CD4-positive, alpha-beta T cell (primary cell): ENCODE measurements at regions of chr6 and their contacts with region 1.

Region 1: DNA sequence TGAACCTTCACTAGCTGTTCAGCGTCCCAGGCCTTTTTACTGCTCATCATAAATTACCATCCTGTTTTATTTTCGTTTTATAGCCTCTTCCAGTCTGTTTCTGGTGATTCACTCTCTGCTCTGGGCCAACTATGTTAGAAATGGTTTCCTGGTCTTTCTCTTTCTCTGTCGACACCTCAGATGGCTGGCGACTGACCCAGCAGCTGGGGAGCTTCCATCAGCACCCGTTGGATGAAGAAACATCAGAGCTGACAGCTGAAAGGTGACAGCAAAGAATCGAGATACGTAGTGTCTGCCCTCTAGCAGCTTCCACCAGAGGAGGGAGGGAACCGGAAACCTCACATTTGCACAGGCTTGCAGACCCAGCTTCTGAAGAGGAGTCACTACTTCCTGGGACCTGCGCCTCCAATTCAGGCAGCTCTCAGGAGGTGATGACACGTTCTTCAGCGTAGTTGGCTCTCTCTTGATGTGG is 82.9 kb upstream of the MLN start:
- DNase-seq: peak in 6 of 14 experiments; percentile 16 to 66 (median 48)
- ATAC-seq: peak; percentile 71
- H3K4me3 ChIP-seq: no peak overlapping the region
- H3K4me3 Mint-ChIP-seq: no peak overlapping the region
- H3K27ac ChIP-seq: no peak overlapping the region
- H3K27ac Mint-ChIP-seq: peak overlapping the region; percentile 34
- H3K4me1 ChIP-seq: peaks cover 18% of the 10 kb centered on the region
- H3K4me1 Mint-ChIP-seq: peaks cover 12% of the 10 kb centered on the region
- H3K27me3 ChIP-seq: no peaks in the 10 kb centered on the region
- H3K27me3 Mint-ChIP-seq: no peaks in the 10 kb centered on the region
- CTCF ChIP-seq: no peak

Region 2: DNA sequence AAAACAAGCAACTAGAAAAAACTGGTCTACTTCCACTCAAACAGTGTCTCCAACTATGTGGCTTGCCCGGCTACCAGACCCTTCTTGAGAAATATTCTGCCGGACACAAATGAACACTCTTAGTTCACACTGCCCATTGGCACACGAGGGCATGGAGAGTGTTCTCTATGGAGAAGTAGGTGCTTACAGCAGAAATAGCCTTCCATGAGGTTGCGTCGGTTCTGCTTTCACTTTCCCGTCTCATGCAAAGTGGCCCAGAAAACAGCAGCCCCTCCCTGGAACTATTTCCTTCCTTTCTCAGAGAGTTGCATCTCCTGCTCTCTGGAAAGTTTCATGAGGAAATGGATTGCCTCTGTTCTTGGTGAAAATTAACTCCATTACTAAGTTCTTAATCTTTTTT is 867.8 kb before region 1 on chr6:
- CTCF ChIA-PET with region 1: no interaction called
- POLR2A ChIA-PET with region 1: no interaction called
- intact Hi-C with region 1: no loop called
- DNase-seq: peak in 7 of 14 experiments; percentile 9 to 75 (median 26)
- ATAC-seq: peak; percentile 81
- H3K4me3 ChIP-seq: peak overlapping the region; percentile 30
- H3K4me3 Mint-ChIP-seq: peak overlapping the region; percentile 87
- H3K27ac ChIP-seq: no peak overlapping the region
- H3K27ac Mint-ChIP-seq: peak overlapping the region; percentile 70
- H3K4me1 ChIP-seq: peaks cover 21% of the 10 kb centered on the region
- H3K4me1 Mint-ChIP-seq: peaks cover 36% of the 10 kb centered on the region
- H3K27me3 ChIP-seq: peaks cover 3 to 5% of the 10 kb centered on the region in 2 experiments
- H3K27me3 Mint-ChIP-seq: peaks cover 5% of the 10 kb centered on the region
- CTCF ChIP-seq: no peak

Region 3: GRCh38 chr6:33949877-33950435 is 63.2 kb after region 1 on chr6:
- CTCF ChIA-PET with region 1: no interaction called
- POLR2A ChIA-PET with region 1: no interaction called
- intact Hi-C with region 1: loop called in 1 of 2 experiments (anchors 5 kb)
- DNase-seq: no peak
- ATAC-seq: no peak
- H3K4me3 ChIP-seq: no peak overlapping the region
- H3K4me3 Mint-ChIP-seq: no peak overlapping the region
- H3K27ac ChIP-seq: no peak overlapping the region
- H3K27ac Mint-ChIP-seq: no peak overlapping the region
- H3K4me1 ChIP-seq: no peaks in the 10 kb centered on the region
- H3K4me1 Mint-ChIP-seq: peaks cover 5% of the 10 kb centered on the region
- H3K27me3 ChIP-seq: no peaks in the 10 kb centered on the region
- H3K27me3 Mint-ChIP-seq: no peaks in the 10 kb centered on the region
- CTCF ChIP-seq: no peak